PC-9 (cell line): ENCODE measurements at regions of chr1 and their contacts with region 1.

Region 1: DNA sequence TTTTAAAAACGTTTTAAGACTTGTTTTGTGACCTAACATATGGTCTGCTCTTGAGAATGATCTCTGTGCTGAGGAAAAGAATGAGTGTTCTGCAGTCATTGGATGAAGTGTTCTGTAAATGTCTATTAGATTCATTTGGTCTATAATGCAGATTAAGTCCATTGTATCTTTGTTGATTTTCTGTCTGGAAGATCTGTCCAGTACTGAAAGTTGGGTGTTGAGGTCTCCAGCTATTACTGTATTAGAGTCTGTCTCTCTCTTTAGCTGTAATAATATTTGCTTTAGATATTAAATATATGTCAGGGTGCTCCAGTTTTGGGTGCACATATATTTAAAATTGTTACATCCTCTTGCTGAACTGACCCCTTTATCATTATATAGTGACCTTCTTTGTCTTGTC is 43.2 kb downstream of the CELF3 start:
- DNase-seq: no peak
- H3K4me3 ChIP-seq: no peak overlapping the region
- H3K27ac ChIP-seq: no peak overlapping the region
- H3K4me1 ChIP-seq: no peaks in the 10 kb centered on the region
- H3K27me3 ChIP-seq: no peaks in the 10 kb centered on the region
- CTCF ChIP-seq: no peak

Region 2: GRCh38 chr1:151553659-151554058 is 119.7 kb before region 1 on chr1:
- CTCF ChIA-PET with region 1: no interaction called
- POLR2A ChIA-PET with region 1: interaction called, 13 read pairs
- intact Hi-C with region 1: no loop called
- DNase-seq: peak in 1 of 2 experiments; percentile 51
- H3K4me3 ChIP-seq: no peak overlapping the region
- H3K27ac ChIP-seq: 0 out of 2 replicates have a peak overlapping the region, but pooled peaks have one; percentile 25
- H3K4me1 ChIP-seq: peaks cover 53% of the 10 kb centered on the region
- H3K27me3 ChIP-seq: no peaks in the 10 kb centered on the region
- CTCF ChIP-seq: no peak

Region 3: DNA sequence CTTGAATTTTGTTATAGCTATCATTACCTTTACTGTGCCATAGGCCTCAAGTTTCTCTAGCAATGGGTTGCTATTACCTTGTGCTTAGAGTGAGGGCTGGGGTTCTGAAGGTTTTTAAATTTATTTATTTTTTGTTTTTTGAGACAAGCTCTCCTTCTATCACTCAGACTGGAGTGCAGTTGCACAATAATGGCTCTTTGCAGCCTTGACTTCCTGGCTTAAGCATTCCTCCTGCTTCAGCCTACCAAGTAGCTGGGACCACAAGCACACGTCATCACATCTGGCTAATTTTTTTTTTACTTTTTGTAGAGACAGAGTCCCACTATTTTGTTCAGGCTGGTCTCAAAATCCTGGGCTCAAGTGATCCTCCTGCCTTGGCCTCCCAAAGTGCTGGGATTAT is 20.0 kb before region 1 on chr1:
- CTCF ChIA-PET with region 1: no interaction called
- POLR2A ChIA-PET with region 1: no interaction called
- intact Hi-C with region 1: no loop called
- DNase-seq: no peak
- H3K4me3 ChIP-seq: no peak overlapping the region
- H3K27ac ChIP-seq: no peak overlapping the region
- H3K4me1 ChIP-seq: no peaks in the 10 kb centered on the region
- H3K27me3 ChIP-seq: no peaks in the 10 kb centered on the region
- CTCF ChIP-seq: no peak

Region 4: DNA sequence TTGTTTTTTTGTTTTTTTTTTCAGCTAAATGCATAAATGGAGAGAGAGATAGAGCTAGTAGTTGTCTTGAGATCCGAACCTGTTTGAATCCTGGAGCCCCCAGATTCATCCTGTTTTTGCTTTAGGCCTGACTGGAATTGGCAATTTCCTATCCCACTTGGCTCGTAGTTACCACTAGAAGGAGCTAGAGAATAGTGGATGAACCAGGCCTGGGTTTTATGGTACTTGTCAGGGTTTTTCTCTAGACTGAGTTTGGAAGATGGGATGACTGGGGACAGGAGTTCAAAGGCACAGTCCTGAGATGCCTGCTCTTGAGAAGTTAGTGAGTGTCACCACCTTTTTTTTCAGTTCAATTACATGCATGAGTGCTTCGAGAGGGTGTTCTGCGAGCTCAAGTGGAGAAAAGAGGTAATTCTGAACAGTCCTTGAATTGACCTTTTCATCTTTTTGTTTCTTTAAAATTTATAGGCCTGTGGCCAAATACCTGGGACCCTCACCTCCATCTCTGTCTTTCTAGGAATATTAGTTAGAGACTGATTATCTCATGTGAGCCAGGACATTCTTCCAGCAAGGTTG is 19.8 kb after region 1 on chr1:
- CTCF ChIA-PET with region 1: no interaction called
- POLR2A ChIA-PET with region 1: no interaction called
- intact Hi-C with region 1: no loop called
- DNase-seq: no peak
- H3K4me3 ChIP-seq: no peak overlapping the region
- H3K27ac ChIP-seq: no peak overlapping the region
- H3K4me1 ChIP-seq: no peaks in the 10 kb centered on the region
- H3K27me3 ChIP-seq: no peaks in the 10 kb centered on the region
- CTCF ChIP-seq: peak; percentile 72